ENCODE measurements at regions of chr6 and their contacts with region 1.

Region 1: GRCh38 chr6:53956068-53956711 is 155.1 kb upstream of the MLIP start:
- DNase-seq: peak; percentile 72
- ATAC-seq: peak; percentile 87

Region 2: DNA sequence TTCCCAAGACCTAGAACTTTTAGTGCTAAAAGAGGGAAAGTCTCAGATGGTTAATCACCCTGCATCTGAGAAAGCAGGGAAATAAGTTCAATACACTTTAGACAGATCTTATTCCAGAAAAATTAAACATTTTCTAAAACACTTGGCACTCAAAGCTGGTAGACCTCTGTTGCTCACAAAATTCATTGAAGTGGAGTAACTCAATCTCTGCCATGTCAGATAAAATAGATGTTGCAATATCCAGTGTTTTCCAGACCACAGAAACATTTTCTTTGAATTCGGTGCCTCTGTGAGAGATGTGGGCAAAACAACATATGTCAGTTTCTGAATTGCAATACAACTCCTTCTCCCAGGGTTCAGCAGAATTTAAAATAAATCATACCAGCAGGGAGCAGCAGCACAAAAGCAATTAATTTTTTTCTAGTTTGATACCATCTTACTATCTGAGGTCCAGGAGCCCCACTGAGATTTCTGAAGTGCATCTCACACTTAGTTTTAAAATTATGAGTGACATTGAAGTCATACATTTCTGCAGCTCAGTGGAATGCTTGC is 1857.5 kb before region 1 on chr6:
- intact Hi-C with region 1: no loop called
- DNase-seq: no peak
- ATAC-seq: no peak

Region 3: GRCh38 chr6:53734473-53735299 is 221.5 kb before region 1 on chr6:
- intact Hi-C with region 1: loop called (anchors 5 kb)
- DNase-seq: peak; percentile 68
- ATAC-seq: peak; percentile 52

Region 4: GRCh38 chr6:53794720-53795253 is 161.4 kb before region 1 on chr6 and contains the start of gene LRRC1:
- intact Hi-C with region 1: loop called (anchors 1 kb)
- DNase-seq: peak; percentile 95
- ATAC-seq: peak; percentile 97
- total RNA-seq, gene LRRC1: 1.1 TPM

Region 5: DNA sequence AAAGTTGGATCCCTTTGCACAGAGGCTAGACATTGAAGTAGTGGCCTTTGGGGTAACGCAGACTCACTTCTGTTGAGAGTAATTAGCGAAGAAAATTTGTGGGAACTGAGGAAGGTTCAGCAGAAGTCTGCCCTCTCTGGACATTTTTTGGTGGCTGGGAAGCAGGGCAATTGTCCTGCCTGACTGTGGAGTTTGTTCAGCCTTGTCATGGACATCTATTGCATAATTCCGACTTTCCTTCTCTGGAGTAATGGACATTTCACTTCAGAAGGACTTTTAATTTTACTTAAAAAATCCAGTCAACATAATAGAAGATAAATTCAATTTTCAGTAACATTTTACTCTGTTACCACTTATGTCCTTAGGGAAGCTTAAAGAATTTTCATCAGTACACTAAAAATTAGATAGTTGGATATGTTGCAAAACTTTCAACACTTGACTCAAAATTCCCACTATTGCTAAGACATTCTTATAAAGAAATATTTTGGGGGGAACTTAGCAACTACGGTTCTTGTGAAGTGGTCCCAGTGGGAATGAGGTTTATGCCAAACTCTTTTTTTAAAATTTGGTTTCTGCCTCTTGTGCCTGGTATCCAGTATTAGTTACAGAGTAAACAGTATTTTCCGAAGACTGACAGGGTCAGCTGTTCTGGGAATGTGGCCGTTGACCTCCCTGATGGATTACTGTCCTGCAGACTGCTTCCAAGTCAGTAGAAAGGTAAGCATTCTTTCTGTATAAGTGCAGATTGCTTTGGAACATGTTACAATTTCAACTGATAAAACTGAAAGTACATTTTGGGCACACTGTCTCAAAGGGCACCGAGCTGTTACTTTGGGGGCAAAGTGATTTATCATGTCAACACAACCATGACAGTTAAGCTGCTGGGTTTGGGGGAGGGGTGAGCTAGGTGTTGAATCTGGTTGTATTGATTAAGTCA is 54.4 kb after region 1 on chr6:
- intact Hi-C with region 1: no loop called
- DNase-seq: no peak
- ATAC-seq: peak; percentile 88

Region 6: DNA sequence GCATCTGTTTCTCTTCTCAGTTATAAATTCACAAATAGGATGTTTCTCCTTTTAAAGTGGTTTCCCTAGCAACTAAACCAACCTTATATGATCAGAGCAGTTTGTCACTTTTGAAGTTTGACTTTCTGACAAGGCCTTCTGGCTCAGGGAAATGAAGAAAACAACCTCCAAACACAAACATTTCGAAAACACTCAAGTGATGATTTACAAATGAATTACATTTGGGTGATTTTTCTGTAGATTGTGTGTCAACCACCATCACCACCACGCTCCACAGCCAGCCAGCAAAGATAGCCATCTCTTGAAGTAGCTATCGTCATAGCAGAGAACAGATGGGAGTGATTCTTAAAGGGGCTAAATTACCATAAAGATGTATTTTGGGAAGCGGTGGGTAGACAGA is 138.6 kb after region 1 on chr6:
- intact Hi-C with region 1: no loop called
- DNase-seq: no peak
- ATAC-seq: no peak

Region 7: DNA sequence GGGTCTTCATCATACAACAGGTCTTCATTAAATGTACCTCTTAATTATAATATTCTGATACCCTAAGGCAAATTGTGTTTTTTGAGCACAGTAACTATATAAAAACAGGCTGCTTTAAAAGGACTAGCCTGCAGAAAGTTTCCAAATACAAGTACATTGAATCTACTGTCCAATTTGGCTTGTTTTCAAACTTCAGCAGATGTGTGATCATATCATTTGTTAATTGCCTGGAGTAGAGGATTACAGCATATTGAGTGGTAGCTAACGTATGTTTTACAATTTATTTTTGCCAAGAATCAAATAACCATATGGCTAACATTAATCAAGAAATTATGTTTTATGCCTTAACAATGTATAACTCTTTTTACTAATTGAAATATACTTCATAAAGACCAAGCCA is 364.7 kb after region 1 on chr6:
- intact Hi-C with region 1: no loop called
- DNase-seq: no peak
- ATAC-seq: no peak